AG04450 (cell line): ENCODE measurements at regions of chr1 and their contacts with region 1.

Region 1: GRCh38 chr1:6199298-6200187 is at the start of gene RPL22:
- DNase-seq: peak; percentile 97
- H3K4me3 ChIP-seq: peak within 1 kb of the TSS; percentile 94
- H3K27ac ChIP-seq: peak within 1 kb of the TSS; percentile 65
- H3K27me3 ChIP-seq: no peaks in the 10 kb centered on the region
- CTCF ChIP-seq: no peak
- polyA plus RNA-seq, gene RPL22: 283 and 393 TPM in 2 replicates

Region 2: DNA sequence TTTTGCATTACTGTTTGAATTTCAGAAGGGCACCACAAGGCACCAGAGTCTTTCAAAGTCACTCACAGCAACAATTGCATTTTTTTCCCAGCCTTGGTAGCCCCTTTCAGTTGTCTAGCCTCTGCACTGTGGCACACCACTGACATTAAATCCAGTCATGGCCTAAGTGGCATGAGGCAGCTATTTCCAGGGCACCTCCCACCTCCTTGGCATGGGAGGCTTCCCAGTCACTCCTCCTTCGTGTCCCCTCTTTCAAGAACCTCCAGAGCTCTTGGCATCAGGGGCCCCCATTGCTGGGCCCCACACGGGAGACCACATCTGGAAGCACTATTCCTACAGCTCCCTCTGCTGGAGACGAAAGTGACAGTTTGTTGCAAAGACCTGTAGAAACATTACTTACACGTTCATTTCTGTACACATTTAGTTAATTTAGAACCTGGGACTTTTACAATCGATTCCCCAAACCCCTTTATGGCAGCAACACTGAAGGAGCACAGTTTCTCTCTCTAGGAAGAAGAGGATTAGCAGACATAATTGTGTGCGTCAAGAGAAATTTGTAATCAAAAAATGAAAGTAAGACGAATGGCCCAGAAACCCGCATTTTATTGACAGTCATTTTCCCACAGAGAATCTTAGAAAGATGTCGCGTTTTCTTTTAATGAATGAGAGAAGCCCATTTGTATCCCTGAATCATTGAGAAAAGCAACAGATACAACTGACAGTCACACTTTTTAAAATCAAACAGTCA is 13.7 kb before region 1 on chr1:
- CTCF ChIA-PET with region 1: interaction called, 15 read pairs
- POLR2A ChIA-PET with region 1: interaction called, 3 read pairs
- DNase-seq: no peak
- H3K4me3 ChIP-seq: no peak overlapping the region
- H3K27ac ChIP-seq: no peak overlapping the region
- H3K27me3 ChIP-seq: peaks cover 6% of the 10 kb centered on the region
- CTCF ChIP-seq: peak; percentile 52

Region 3: GRCh38 chr1:6222636-6223035 is 23.1 kb after region 1 on chr1:
- CTCF ChIA-PET with region 1: interaction called, 19 read pairs
- POLR2A ChIA-PET with region 1: no interaction called
- DNase-seq: no peak
- H3K4me3 ChIP-seq: no peak overlapping the region
- H3K27ac ChIP-seq: no peak overlapping the region
- H3K27me3 ChIP-seq: no peaks in the 10 kb centered on the region
- CTCF ChIP-seq: no peak

Region 4: GRCh38 chr1:6317098-6317760 is 117.7 kb after region 1 on chr1:
- CTCF ChIA-PET with region 1: no interaction called
- POLR2A ChIA-PET with region 1: no interaction called
- DNase-seq: no peak
- H3K4me3 ChIP-seq: no peak overlapping the region
- H3K27ac ChIP-seq: peak overlapping the region; percentile 31
- H3K27me3 ChIP-seq: no peaks in the 10 kb centered on the region
- CTCF ChIP-seq: no peak